Ascending aorta (tissue), 2 donors: ENCODE measurements at regions of chr4 and their contacts with region 1.

Region 1: GRCh38 chr4:185566972-185567371 is 31.7 kb upstream of the PDLIM3 start:
- DNase-seq: peak in 1 of 2 donors; percentile 90
- H3K4me3 ChIP-seq: no peak overlapping the region
- H3K27ac ChIP-seq: peak overlapping the region; percentile 94 to 95
- H3K4me1 ChIP-seq: peaks cover 17 to 37% of the 10 kb centered on the region in 2 donors
- H3K27me3 ChIP-seq: no peaks in the 10 kb centered on the region
- CTCF ChIP-seq: no peak

Region 2: DNA sequence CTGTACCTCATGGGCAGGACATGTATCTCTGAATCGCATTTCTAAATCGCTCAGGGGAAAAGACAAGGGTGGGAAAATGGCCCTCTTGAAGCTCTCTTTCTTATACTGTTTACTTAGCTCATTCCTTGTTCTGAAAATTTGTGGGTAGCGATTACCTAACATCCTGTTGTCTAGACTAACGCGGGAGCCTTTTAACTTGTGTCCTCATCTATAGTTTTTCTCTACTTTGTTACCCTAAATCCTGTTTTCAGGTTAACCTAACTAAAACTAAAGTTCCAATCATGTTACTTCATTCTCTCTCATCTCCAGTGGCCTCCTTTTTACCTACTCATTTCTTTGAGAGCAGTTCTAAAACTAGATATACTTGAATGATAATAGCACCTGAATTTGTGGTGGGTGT is 312.5 kb before region 1 on chr4:
- intact Hi-C with region 1: no loop called
- DNase-seq: no peak
- H3K4me3 ChIP-seq: no peak overlapping the region
- H3K27ac ChIP-seq: no peak overlapping the region
- H3K4me1 ChIP-seq: peaks cover 0 to 12% of the 10 kb centered on the region in 2 donors
- H3K27me3 ChIP-seq: no peaks in the 10 kb centered on the region
- CTCF ChIP-seq: no peak

Region 3: DNA sequence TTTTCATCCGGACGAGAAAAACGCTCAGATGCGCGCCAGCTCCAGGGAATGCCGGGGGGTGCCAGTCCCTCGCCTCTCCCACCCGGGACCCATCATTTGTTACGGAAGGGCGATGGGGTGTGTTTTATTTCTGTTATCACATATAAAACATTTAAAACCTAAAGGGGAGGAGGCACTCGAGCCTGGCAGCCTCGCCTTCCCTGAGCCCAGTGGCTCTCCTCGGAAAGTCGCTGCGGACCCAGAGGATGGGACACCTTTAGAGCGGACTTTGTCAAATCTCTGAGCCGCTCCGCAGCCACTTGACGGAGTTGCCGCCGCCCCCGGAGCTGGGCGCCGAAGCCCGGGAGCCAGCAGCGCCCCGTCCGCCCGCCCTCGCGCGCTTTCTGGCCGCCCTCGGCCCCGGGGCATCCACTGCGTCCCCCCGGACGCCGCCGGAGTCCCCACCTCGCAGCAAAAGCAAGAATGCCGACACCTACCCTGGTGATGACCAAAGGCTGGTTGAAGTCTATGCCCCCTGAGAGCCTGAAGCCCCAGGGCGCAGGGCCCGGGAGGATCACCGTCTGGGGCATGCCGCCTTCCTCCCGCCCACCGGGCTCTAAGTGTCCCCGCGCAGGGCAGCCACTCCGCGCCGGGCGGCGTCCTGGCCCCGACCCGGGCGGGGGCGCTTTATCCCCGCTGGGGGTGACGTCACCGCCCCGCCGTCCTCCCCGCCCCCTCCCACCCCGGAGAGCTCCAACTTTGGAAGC is 31.9 kb before region 1 on chr4 and contains the start of gene PDLIM3:
- intact Hi-C with region 1: loop called (anchors 1 kb)
- DNase-seq: peak in 1 of 2 donors; percentile 92
- H3K4me3 ChIP-seq: peak within 1 kb of the TSS; percentile 65 to 93
- H3K27ac ChIP-seq: peak within 1 kb of the TSS; percentile 94 to 98
- H3K4me1 ChIP-seq: peaks cover 0 to 3% of the 10 kb centered on the region in 2 donors
- H3K27me3 ChIP-seq: no peaks in the 10 kb centered on the region
- CTCF ChIP-seq: no peak
- total RNA-seq, gene PDLIM3: 445 TPM

Region 4: DNA sequence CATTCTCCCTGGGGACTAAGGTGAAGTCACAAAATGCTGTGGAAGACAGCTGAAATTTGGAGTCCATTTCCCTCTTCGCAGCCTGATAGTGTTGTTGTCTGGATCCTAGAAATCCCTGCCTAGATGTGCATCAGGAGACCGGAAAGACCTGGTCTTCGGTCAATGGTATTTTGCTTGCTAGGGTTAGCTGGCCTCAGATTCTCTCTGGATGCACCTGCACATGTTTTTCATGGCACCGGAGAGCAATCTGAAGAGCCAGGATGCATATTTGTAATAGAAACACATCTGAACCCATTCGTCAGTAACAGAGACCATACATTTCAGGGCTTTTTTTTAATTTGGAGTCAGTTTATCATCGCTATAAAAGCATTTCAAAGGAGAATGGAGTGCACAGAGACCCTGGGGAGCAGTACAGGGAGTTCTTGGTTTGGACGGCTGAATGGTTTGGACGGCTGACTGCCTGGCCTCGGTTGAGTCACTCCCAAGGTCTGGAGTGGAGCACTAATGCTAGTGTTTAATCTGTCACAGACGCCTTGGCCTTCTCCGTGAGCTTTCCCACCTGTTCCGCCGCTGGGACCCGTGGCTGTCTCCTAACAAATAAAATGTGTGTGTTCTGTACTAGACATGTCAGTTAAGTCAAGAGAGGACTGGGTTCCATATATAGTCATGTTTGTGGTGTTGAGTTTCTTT is 24.2 kb before region 1 on chr4:
- intact Hi-C with region 1: loop called (anchors 1 kb)
- DNase-seq: peak in 1 of 2 donors; percentile 82
- H3K4me3 ChIP-seq: no peak overlapping the region
- H3K27ac ChIP-seq: peak overlapping the region; percentile 72 to 74
- H3K4me1 ChIP-seq: peaks cover 5 to 18% of the 10 kb centered on the region in 2 donors
- H3K27me3 ChIP-seq: no peaks in the 10 kb centered on the region
- CTCF ChIP-seq: no peak

Region 5: GRCh38 chr4:185591679-185592141 is 24.7 kb after region 1 on chr4:
- intact Hi-C with region 1: loop called (anchors 2 kb)
- DNase-seq: no peak
- H3K4me3 ChIP-seq: no peak overlapping the region
- H3K27ac ChIP-seq: peak overlapping the region; percentile 56 to 59
- H3K4me1 ChIP-seq: peaks cover 0 to 12% of the 10 kb centered on the region in 2 donors
- H3K27me3 ChIP-seq: no peaks in the 10 kb centered on the region
- CTCF ChIP-seq: no peak

Region 6: DNA sequence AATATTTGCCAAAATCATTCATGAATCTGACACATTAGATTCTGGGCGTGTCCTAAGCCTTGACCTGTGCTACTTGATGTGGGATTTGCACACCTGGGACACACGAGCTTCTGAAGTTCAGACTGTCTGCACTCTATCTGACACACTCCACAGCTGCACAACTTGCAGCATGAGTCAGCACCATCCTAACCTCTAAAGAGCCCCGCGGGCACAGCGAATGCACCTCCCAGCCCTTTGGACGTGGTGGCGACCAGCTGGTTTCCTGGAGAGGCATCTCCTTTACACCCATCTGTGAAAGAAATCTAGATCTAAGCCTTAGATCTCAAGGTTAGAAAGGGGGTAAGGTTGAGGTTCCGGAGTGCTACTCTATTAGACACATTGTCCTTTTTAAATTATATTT is 175.8 kb after region 1 on chr4:
- intact Hi-C with region 1: no loop called
- DNase-seq: no peak
- H3K4me3 ChIP-seq: no peak overlapping the region
- H3K27ac ChIP-seq: peak overlapping the region; percentile 31 to 69
- H3K4me1 ChIP-seq: peaks cover 1 to 26% of the 10 kb centered on the region in 2 donors
- H3K27me3 ChIP-seq: no peaks in the 10 kb centered on the region
- CTCF ChIP-seq: no peak

Region 7: GRCh38 chr4:185849664-185850550 is 282.9 kb after region 1 on chr4:
- intact Hi-C with region 1: no loop called
- DNase-seq: no peak
- H3K4me3 ChIP-seq: no peak overlapping the region
- H3K27ac ChIP-seq: no peak overlapping the region
- H3K4me1 ChIP-seq: peaks cover 0 to 2% of the 10 kb centered on the region in 2 donors
- H3K27me3 ChIP-seq: no peaks in the 10 kb centered on the region
- CTCF ChIP-seq: no peak